ENCODE measurements at regions of chr9 and their contacts with region 1.

Region 1: GRCh38 chr9:127525401-127526187 is 74.3 kb downstream of the LRSAM1 start:
- DNase-seq: peak; percentile 55
- ATAC-seq: peak; percentile 68
- H3K4me3 Mint-ChIP-seq: no peak overlapping the region
- H3K27ac Mint-ChIP-seq: no peak overlapping the region
- H3K4me1 Mint-ChIP-seq: no peaks in the 10 kb centered on the region
- H3K27me3 Mint-ChIP-seq: no peaks in the 10 kb centered on the region
- CTCF ChIP-seq: peak; percentile 74

Region 2: GRCh38 chr9:127489471-127490115 is 36.0 kb before region 1 on chr9:
- CTCF ChIA-PET with region 1: no interaction called
- POLR2A ChIA-PET with region 1: no interaction called
- intact Hi-C with region 1: no loop called
- DNase-seq: no peak
- ATAC-seq: no peak
- H3K4me3 Mint-ChIP-seq: no peak overlapping the region
- H3K27ac Mint-ChIP-seq: no peak overlapping the region
- H3K4me1 Mint-ChIP-seq: no peaks in the 10 kb centered on the region
- H3K27me3 Mint-ChIP-seq: no peaks in the 10 kb centered on the region
- CTCF ChIP-seq: no peak

Region 3: GRCh38 chr9:127503947-127504782 is 21.4 kb before region 1 on chr9:
- CTCF ChIA-PET with region 1: interaction called, 17 read pairs
- POLR2A ChIA-PET with region 1: no interaction called
- intact Hi-C with region 1: no loop called
- DNase-seq: peak; percentile 92
- ATAC-seq: peak; percentile 94
- H3K4me3 Mint-ChIP-seq: no peak overlapping the region
- H3K27ac Mint-ChIP-seq: no peak overlapping the region
- H3K4me1 Mint-ChIP-seq: no peaks in the 10 kb centered on the region
- H3K27me3 Mint-ChIP-seq: no peaks in the 10 kb centered on the region
- CTCF ChIP-seq: peak; percentile 88

Region 4: GRCh38 chr9:127537792-127538191 is 12.2 kb after region 1 on chr9:
- CTCF ChIA-PET with region 1: interaction called, 15 read pairs
- POLR2A ChIA-PET with region 1: no interaction called
- intact Hi-C with region 1: no loop called
- DNase-seq: no peak
- ATAC-seq: no peak
- H3K4me3 Mint-ChIP-seq: no peak overlapping the region
- H3K27ac Mint-ChIP-seq: no peak overlapping the region
- H3K4me1 Mint-ChIP-seq: no peaks in the 10 kb centered on the region
- H3K27me3 Mint-ChIP-seq: no peaks in the 10 kb centered on the region
- CTCF ChIP-seq: no peak

Region 5: DNA sequence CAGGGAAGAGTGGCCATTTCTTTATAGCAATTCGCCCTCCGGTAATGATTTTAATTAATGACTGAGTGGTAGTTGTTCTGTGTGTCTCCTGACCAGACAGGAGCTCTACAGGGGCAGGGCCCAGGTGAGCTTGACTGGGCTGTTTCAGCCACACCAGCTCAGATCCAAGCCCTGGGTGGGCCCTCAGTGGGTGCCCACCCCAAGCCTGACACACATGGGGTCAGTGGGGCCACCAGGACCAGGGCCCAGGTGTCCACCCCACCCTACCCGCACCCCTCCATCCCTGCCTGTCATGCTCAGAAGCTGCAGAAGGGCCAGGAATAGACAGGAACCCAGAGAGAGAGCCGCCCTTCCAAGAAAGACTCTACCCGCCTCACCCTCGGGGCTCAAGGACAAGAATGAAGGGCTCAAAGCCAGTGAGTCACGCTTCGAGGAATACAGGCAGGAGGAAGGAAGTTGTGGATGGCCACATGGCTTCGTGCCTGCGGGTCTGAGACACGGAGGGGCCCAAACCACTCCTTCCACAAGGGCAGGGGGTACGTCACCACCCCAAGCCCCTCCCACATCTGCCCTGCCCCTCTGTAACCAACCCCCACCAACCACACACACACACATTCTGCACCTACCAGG is 30.3 kb after region 1 on chr9:
- CTCF ChIA-PET with region 1: interaction called, 11 read pairs
- POLR2A ChIA-PET with region 1: no interaction called
- intact Hi-C with region 1: no loop called
- DNase-seq: peak; percentile 88
- ATAC-seq: peak; percentile 92
- H3K4me3 Mint-ChIP-seq: peak overlapping the region; percentile 45
- H3K27ac Mint-ChIP-seq: peak overlapping the region; percentile 81
- H3K4me1 Mint-ChIP-seq: peaks cover 45% of the 10 kb centered on the region
- H3K27me3 Mint-ChIP-seq: no peaks in the 10 kb centered on the region
- CTCF ChIP-seq: no peak

Region 6: DNA sequence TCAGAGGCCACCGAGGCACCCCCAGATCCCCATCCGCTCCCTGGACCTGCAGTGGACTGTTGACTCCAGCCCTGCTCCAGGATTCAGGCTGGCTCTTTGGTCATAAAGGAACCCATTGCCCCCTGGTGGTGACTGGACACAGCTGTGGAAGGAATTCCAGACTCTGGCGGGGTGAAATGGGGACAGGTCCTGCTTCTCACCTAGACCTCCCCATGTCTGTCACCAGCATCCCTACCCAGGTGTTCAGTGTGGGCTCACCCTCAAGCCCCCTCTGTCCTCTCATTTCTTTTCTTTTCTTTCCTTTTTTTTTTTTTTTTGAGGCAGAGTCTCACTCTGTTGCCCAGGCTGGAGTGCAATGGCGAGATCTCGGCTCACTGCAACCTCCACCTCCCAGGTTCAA is 60.9 kb after region 1 on chr9:
- CTCF ChIA-PET with region 1: interaction called, 15 read pairs
- POLR2A ChIA-PET with region 1: interaction called, 3 read pairs
- intact Hi-C with region 1: no loop called
- DNase-seq: peak; percentile 77
- ATAC-seq: peak; percentile 76
- H3K4me3 Mint-ChIP-seq: no peak overlapping the region
- H3K27ac Mint-ChIP-seq: no peak overlapping the region
- H3K4me1 Mint-ChIP-seq: peaks cover 6% of the 10 kb centered on the region
- H3K27me3 Mint-ChIP-seq: peaks cover 9% of the 10 kb centered on the region
- CTCF ChIP-seq: peak; percentile 80

Measured in activated CD8-positive, alpha-beta T cell treated with anti-CD3 and anti-CD28 coated beads for 36 hours (primary cell).